Left lung (tissue), 14 donors: ENCODE measurements at regions of chr2 and their contacts with region 1.

Region 1: GRCh38 chr2:70340921-70341765 is 39.3 kb upstream of the FAM136A start:
- DNase-seq: peak in 1 of 4 donors; percentile 33
- ATAC-seq: peak; percentile 95
- H3K4me3 ChIP-seq: no peak overlapping the region
- H3K27ac ChIP-seq: no peak overlapping the region
- H3K4me1 ChIP-seq: no peaks in the 10 kb centered on the region
- H3K27me3 ChIP-seq: peaks cover 0 to 9% of the 10 kb centered on the region in 2 donors
- CTCF ChIP-seq: peak; percentile 64 to 75

Region 2: DNA sequence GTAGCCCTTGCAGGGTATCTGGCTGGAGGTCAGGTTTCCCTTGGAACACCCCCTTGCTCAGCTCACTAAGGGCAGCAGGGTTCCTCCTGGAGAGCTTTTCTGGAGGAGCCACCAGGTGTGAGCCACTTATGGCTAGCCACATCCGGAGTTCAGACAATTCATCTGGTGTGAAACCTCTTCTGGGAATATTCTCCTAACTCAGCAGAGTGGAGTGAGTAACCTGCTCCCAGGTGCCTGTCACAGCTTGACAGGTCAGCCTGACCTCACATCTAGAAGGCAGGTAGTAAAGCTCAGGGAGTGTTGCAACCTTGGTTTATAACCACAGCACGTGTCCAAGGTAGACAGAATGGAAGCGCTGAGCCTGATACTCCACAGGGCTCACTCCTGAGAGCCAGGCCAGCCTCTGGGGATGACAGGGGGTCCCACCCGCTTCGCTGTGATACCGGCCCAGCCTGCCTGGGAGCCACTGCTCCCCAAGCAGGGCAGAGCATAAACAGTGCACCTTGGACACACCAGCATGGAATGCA is 275.1 kb after region 1 on chr2:
- intact Hi-C with region 1: loop called in 1 of 2 experiments (anchors 5 kb)
- DNase-seq: peak in 1 of 4 donors; percentile 62
- ATAC-seq: peak; percentile 81
- H3K4me3 ChIP-seq: no peak overlapping the region
- H3K27ac ChIP-seq: no peak overlapping the region
- H3K4me1 ChIP-seq: no peaks in the 10 kb centered on the region
- H3K27me3 ChIP-seq: no peaks in the 10 kb centered on the region
- CTCF ChIP-seq: no peak

Region 3: GRCh38 chr2:70647873-70648481 is 306.8 kb after region 1 on chr2:
- intact Hi-C with region 1: loop called in 1 of 2 experiments (anchors 10 kb)
- DNase-seq: peak in 3 of 4 donors; percentile 51 to 76 (median 63)
- ATAC-seq: peak; percentile 93
- H3K4me3 ChIP-seq: no peak overlapping the region
- H3K27ac ChIP-seq: no peak overlapping the region
- H3K4me1 ChIP-seq: no peaks in the 10 kb centered on the region
- H3K27me3 ChIP-seq: peaks cover 0 to 17% of the 10 kb centered on the region in 2 donors
- CTCF ChIP-seq: peak; percentile 87 to 98